Activated T-helper 1 cell treated with anti-CD3 and anti-CD28 coated beads, Interleukin-12 subunit alpha, Interleukin-12 subunit beta, Interleukin-2, Interleukin-4 antibody, amounts not matched to agents 30 ng/mL and 10 ng/mL and 1 ng/mL, durations not matched to agents 14 hours and 24 hours and 36 hours (primary cell): ENCODE measurements at regions of chr7 and their contacts with region 1.

Region 1: GRCh38 chr7:144738708-144739314 is 97.0 kb downstream of the TPK1 start:
- DNase-seq: peak; percentile 1
- H3K4me3 Mint-ChIP-seq: no peak overlapping the region
- H3K27ac Mint-ChIP-seq: no peak overlapping the region
- H3K4me1 Mint-ChIP-seq: no peaks in the 10 kb centered on the region
- H3K27me3 Mint-ChIP-seq: no peaks in the 10 kb centered on the region

Region 2: GRCh38 chr7:144854839-144855424 is 116.1 kb after region 1 on chr7:
- intact Hi-C with region 1: loop called (anchors 1 kb)
- DNase-seq: no peak
- H3K4me3 Mint-ChIP-seq: no peak overlapping the region
- H3K27ac Mint-ChIP-seq: no peak overlapping the region
- H3K4me1 Mint-ChIP-seq: no peaks in the 10 kb centered on the region
- H3K27me3 Mint-ChIP-seq: no peaks in the 10 kb centered on the region

Region 3: GRCh38 chr7:145030754-145031153 is 291.9 kb after region 1 on chr7:
- intact Hi-C with region 1: loop called (anchors 1 kb)
- DNase-seq: no peak
- H3K4me3 Mint-ChIP-seq: no peak overlapping the region
- H3K27ac Mint-ChIP-seq: no peak overlapping the region
- H3K4me1 Mint-ChIP-seq: no peaks in the 10 kb centered on the region
- H3K27me3 Mint-ChIP-seq: peaks cover 2% of the 10 kb centered on the region

Region 4: DNA sequence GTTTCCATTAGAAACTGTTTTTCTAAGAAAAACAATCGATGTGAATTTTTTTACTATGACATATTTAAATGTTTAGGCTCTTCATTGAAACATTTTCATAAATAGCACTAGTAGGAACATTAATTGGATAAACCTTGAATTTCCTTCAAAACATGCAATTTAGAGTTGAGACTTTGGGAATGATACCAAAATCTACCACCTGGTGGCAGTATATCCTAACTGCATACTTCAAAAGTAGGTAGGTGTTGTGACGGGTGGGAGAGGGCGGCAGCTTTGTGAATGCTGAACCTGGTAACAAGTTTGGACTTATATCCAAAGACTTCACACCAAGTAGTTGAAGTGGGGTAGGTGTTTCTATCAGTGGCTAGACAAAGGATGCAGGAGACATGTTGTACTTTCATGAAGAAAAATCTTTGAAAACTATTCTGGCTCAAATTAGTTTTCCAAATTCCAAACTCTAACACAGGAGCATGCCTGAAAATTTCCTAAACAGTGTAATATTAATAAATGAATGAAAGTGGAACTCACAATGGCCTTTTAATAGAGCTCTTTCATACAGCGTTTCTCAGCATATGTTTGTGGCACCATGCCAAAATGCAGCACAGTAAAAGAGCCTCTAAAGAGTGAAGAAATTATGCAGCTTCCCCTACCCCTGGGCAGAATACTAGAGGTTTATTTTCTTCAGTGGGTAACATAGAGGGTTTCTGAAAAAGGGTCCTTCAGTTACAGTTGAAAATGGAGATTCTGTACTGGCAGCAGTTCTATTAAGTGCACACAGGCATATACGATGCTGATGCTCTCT is 298.0 kb after region 1 on chr7:
- intact Hi-C with region 1: loop called (anchors 2 kb)
- DNase-seq: peak; percentile 2
- H3K4me3 Mint-ChIP-seq: no peak overlapping the region
- H3K27ac Mint-ChIP-seq: no peak overlapping the region
- H3K4me1 Mint-ChIP-seq: no peaks in the 10 kb centered on the region
- H3K27me3 Mint-ChIP-seq: peaks cover 3% of the 10 kb centered on the region